A549 (cell line): ENCODE measurements at regions of chr15 and their contacts with region 1.

Region 1: GRCh38 chr15:72451224-72451623 is 22.9 kb upstream of the ARIH1 start:
- DNase-seq: no peak
- ATAC-seq: peak in 1 of 2 experiments; percentile 51; a peak in 3 of 6 replicates
- H3K4me3 ChIP-seq: no peak overlapping the region
- H3K27ac ChIP-seq: no peak overlapping the region
- H3K4me1 ChIP-seq: no peaks in the 10 kb centered on the region
- CTCF ChIP-seq: no peak
- EP300 ChIP-seq: no peak
- POLR2A ChIP-seq: no peak
- RAD21 ChIP-seq: no peak

Region 2: DNA sequence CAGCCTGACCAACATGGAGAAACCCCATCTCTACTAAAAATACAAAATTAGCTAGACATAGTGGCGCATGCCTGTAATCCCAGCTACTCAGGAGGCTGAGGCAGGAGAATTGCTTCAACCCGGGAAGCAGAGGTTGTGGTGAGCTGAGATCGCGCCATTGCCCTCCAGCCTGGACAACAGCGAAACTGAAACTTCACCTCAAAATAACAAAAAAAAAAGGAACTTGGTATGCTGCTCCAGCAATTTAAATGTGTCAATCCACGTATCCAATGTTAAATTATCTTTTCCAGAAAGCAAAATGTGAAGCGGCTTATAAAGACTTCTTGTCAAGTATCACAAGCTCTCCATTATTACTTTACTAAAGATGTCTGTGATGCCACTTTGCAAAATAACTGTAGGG is 13.0 kb after region 1 on chr15:
- CTCF ChIA-PET with region 1: interaction called, 20 read pairs
- POLR2A ChIA-PET with region 1: no interaction called
- DNase-seq: no peak
- ATAC-seq: no peak
- H3K4me3 ChIP-seq: no peak overlapping the region
- H3K27ac ChIP-seq: no peak overlapping the region
- H3K4me1 ChIP-seq: no peaks in the 10 kb centered on the region
- CTCF ChIP-seq: no peak
- EP300 ChIP-seq: no peak
- POLR2A ChIP-seq: no peak
- RAD21 ChIP-seq: no peak

Region 3: GRCh38 chr15:72473614-72474465 is 22.6 kb after region 1 on chr15 and contains the start of gene ARIH1:
- CTCF ChIA-PET with region 1: interaction called, 8 read pairs
- POLR2A ChIA-PET with region 1: interaction called, 10 read pairs
- DNase-seq: peak; percentile 81 to 99
- ATAC-seq: peak; percentile 86 to 88
- H3K4me3 ChIP-seq: peak within 1 kb of the TSS; percentile 81
- H3K27ac ChIP-seq: peak within 1 kb of the TSS; percentile 90 to 93
- H3K4me1 ChIP-seq: peaks cover 21% of the 10 kb centered on the region
- CTCF ChIP-seq: peak; percentile 53
- EP300 ChIP-seq: no peak
- POLR2A ChIP-seq: peak; percentile 95
- RAD21 ChIP-seq: peak in 1 of 2 experiments; percentile 39; a peak in 3 of 5 replicates
- polyA plus RNA-seq, gene ARIH1: 127 and 138 TPM in 2 replicates